Activated T-helper 1 cell treated with anti-CD3 and anti-CD28 coated beads, Interleukin-12 subunit alpha, Interleukin-12 subunit beta, Interleukin-2, Interleukin-4 antibody, amounts not matched to agents 30 ng/mL and 10 ng/mL and 1 ng/mL, durations not matched to agents 14 hours and 24 hours and 36 hours (primary cell): ENCODE measurements at regions of chr3 and their contacts with region 1.

Region 1: GRCh38 chr3:187738331-187739093 is 6.8 kb downstream of the BCL6 start:
- DNase-seq: peak; percentile 67
- H3K4me3 Mint-ChIP-seq: peak overlapping the region; percentile 96
- H3K27ac Mint-ChIP-seq: peak overlapping the region; percentile 92
- H3K4me1 Mint-ChIP-seq: peaks cover 71% of the 10 kb centered on the region
- H3K27me3 Mint-ChIP-seq: no peaks in the 10 kb centered on the region

Region 2: DNA sequence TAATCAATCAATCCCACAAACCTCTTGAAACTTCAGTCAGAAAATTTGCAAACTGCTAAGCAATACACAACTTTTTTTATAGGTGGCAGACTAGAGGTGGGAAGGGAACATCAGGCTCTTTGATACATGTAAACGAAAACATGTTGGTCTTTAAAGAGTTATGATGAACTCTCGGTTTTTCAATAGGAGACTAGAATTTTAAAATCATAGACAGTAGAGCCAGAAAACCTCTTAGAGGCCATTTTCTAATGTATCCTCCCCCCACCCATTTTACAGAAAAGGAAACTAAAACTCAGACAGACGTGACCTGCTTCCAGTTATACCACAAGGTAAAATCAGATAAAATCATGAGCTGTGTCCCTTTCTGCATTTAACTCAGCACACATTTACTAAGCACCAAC is 236.4 kb after region 1 on chr3:
- intact Hi-C with region 1: loop called (anchors 1 kb)
- DNase-seq: no peak
- H3K4me3 Mint-ChIP-seq: peak overlapping the region; percentile 59
- H3K27ac Mint-ChIP-seq: peak overlapping the region; percentile 94
- H3K4me1 Mint-ChIP-seq: peaks cover 62% of the 10 kb centered on the region
- H3K27me3 Mint-ChIP-seq: peaks cover 2% of the 10 kb centered on the region

Region 3: DNA sequence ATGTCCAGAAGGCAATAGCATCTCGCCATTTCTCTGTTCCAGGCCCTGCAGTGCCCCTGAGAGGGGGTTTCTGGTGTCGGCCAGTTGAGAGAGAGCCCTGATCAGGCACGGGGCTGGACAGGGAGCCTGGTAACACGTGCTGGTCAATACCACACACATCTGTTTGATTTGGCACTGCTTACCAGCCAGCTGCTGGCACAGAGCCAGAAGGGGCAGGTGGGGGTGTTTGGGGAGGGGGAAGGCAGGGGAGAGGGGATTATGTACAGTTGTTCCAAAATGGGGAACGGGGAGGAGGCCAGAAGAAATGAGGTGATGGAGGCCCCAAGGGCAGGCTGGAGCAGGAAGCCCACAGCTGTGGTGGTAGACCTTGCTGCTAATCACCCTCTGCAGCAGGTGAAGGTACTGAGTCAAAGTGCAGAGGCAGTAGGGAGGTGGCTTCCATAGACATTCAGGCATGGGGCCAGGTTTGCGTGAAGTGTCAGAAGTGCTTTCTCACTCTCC is 261.9 kb after region 1 on chr3:
- intact Hi-C with region 1: no loop called
- DNase-seq: no peak
- H3K4me3 Mint-ChIP-seq: peak overlapping the region; percentile 71
- H3K27ac Mint-ChIP-seq: peak overlapping the region; percentile 93
- H3K4me1 Mint-ChIP-seq: peaks cover 84% of the 10 kb centered on the region
- H3K27me3 Mint-ChIP-seq: no peaks in the 10 kb centered on the region

Region 4: GRCh38 chr3:188257384-188258026 is 519.0 kb after region 1 on chr3:
- intact Hi-C with region 1: loop called (anchors 1 kb)
- DNase-seq: no peak
- H3K4me3 Mint-ChIP-seq: no peak overlapping the region
- H3K27ac Mint-ChIP-seq: peak overlapping the region; percentile 63
- H3K4me1 Mint-ChIP-seq: peaks cover 62% of the 10 kb centered on the region
- H3K27me3 Mint-ChIP-seq: peaks cover 2% of the 10 kb centered on the region

Region 5: DNA sequence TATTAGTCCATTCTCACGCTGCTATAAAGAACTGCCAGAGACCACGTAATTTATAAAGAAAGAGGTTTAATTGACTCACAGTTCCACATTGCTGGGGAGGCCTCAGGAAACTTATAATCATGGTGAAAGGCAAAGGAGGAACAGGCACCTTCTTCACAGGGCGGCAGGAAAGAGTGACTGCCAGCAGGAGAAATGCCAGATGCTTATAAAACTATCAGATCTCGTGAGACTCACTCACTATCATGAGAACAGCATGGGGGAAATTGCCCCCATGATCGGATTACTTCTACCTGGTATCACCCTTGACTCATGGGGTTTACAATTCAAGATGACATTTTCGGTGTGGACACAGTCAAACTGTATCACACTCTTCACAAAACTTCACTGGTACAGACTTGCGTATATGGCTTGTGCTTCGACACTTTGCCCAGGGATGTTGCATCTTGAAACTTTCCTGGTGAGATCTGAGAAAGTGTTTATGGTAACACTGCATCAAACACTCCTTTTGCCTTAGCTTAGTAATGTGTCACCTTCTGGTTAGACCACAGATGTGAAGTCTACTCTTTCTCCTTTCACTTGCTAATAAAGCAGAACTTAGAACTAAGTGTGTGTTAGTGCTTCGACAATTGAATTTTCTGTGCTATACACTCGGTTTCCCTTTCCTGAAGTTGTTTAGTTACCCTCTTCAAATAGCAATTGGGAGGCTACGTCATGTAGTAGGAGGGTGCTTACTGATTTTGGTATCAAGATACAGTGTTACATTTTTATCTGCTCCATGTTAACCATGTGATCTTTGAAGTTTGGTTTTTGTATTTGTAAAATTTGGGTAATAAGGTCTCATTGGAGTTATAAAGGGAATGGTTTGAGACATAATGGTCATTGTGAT is 601.1 kb after region 1 on chr3:
- intact Hi-C with region 1: loop called (anchors 1 kb)
- DNase-seq: peak; percentile 39
- H3K4me3 Mint-ChIP-seq: peak overlapping the region; percentile 63
- H3K27ac Mint-ChIP-seq: peak overlapping the region; percentile 86
- H3K4me1 Mint-ChIP-seq: peaks cover 37% of the 10 kb centered on the region
- H3K27me3 Mint-ChIP-seq: peaks cover 24% of the 10 kb centered on the region

Region 6: GRCh38 chr3:188683032-188683521 is 944.6 kb after region 1 on chr3:
- intact Hi-C with region 1: loop called (anchors 5 kb)
- DNase-seq: no peak
- H3K4me3 Mint-ChIP-seq: no peak overlapping the region
- H3K27ac Mint-ChIP-seq: peak overlapping the region; percentile 74
- H3K4me1 Mint-ChIP-seq: peaks cover 28% of the 10 kb centered on the region
- H3K27me3 Mint-ChIP-seq: no peaks in the 10 kb centered on the region

Region 7: DNA sequence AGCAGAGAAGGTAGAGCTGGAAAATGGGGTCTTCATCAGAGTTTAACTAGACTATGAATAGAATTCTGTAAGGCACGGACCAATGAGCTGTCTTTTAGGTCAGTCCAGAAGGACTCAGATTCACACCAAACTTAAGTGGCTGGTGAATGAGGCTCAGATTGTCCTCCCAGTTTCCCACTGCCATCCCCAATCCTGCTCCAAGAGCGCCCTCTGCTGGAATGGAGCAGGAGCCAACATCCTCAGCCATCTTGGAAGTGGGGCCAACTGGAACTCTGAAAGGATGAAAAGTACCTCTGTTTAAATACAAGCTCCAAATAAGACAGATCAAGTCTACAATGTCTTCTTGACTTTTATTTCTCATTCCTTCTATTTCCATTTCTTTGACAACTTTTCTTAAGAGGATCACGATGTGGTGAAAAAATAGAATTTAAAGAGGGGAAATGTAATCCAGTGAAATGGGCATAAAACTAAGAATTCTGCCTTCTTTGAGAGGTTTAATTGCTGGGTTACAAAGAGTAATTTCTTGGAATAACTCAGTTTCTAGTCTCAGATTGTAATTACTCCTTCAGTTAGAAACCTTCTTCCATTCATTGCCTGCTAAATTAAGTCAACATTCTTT is 1216.2 kb after region 1 on chr3:
- intact Hi-C with region 1: loop called (anchors 1 kb)
- DNase-seq: peak; percentile 68
- H3K4me3 Mint-ChIP-seq: no peak overlapping the region
- H3K27ac Mint-ChIP-seq: no peak overlapping the region
- H3K4me1 Mint-ChIP-seq: peaks cover 46% of the 10 kb centered on the region
- H3K27me3 Mint-ChIP-seq: no peaks in the 10 kb centered on the region